Activated T-helper 1 cell treated with anti-CD3 and anti-CD28 coated beads, Interleukin-12 subunit alpha, Interleukin-12 subunit beta, Interleukin-2, Interleukin-4 antibody, amounts not matched to agents 30 ng/mL and 10 ng/mL and 1 ng/mL, durations not matched to agents 14 hours and 24 hours and 36 hours (primary cell): ENCODE measurements at regions of chr4 and their contacts with region 1.

Region 1: DNA sequence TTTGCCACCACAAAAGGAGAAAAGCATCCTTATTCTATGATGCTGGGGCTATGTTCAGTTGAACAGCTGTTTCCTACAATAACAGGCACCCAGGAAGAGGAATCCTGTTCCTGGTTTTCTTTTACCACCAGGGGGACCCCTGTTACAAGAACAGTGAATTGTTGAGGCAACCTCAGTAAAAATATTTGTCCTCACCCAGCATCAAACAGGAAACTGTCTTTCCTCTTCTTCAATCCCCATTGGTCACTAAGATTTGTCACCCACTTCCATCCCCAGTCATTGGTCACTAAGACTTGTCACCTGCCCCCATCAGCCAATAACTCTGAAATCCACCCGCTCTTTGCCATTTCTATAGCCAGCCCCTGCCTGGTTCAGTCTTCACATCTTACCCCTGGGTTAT is 143.5 kb upstream of the GALNT7 start:
- DNase-seq: no peak
- H3K4me3 Mint-ChIP-seq: no peak overlapping the region
- H3K27ac Mint-ChIP-seq: no peak overlapping the region
- H3K4me1 Mint-ChIP-seq: no peaks in the 10 kb centered on the region
- H3K27me3 Mint-ChIP-seq: peaks cover 14% of the 10 kb centered on the region

Region 2: DNA sequence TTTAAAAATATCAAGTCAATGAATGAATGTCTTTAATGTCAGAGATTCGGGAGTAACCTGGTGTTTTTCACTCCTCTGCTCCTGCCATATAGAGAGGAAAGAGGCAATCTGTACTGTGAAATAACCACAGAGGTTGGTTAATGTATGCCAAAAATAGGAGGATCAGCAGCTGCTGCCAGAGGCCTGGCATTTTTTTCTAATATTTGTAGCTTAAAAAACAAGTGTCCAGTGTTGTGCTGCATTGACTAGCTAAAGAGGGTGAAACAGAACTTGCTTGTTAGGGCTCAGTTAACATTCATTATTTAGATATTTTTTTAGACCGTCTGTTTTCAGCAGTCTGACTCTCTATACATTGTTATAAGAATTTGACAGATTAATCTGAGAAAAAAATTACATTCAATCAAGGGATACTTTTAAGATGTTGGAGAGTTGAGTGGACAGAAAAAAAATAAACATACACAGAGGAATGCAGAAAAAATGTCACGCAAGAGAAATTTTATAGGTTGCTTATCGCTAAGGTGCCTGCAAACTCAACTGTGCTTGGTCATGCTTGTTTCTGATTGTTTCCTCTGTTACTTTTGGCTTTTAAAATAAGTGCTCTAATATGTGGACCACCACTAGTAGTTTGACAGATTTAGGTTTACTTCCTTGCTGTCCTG is 248.8 kb before region 1 on chr4:
- intact Hi-C with region 1: no loop called
- DNase-seq: no peak
- H3K4me3 Mint-ChIP-seq: no peak overlapping the region
- H3K27ac Mint-ChIP-seq: no peak overlapping the region
- H3K4me1 Mint-ChIP-seq: no peaks in the 10 kb centered on the region
- H3K27me3 Mint-ChIP-seq: no peaks in the 10 kb centered on the region

Region 3: GRCh38 chr4:173257732-173258717 is 232.9 kb after region 1 on chr4:
- intact Hi-C with region 1: loop called (anchors 1 kb)
- DNase-seq: peak; percentile 34
- H3K4me3 Mint-ChIP-seq: no peak overlapping the region
- H3K27ac Mint-ChIP-seq: no peak overlapping the region
- H3K4me1 Mint-ChIP-seq: no peaks in the 10 kb centered on the region
- H3K27me3 Mint-ChIP-seq: peaks cover 3% of the 10 kb centered on the region

Region 4: GRCh38 chr4:173301518-173302201 is 276.5 kb after region 1 on chr4:
- intact Hi-C with region 1: loop called (anchors 1 kb)
- DNase-seq: no peak
- H3K4me3 Mint-ChIP-seq: no peak overlapping the region
- H3K27ac Mint-ChIP-seq: no peak overlapping the region
- H3K4me1 Mint-ChIP-seq: no peaks in the 10 kb centered on the region
- H3K27me3 Mint-ChIP-seq: no peaks in the 10 kb centered on the region